ENCODE measurements at regions of chr6 and their contacts with region 1.

Region 1: DNA sequence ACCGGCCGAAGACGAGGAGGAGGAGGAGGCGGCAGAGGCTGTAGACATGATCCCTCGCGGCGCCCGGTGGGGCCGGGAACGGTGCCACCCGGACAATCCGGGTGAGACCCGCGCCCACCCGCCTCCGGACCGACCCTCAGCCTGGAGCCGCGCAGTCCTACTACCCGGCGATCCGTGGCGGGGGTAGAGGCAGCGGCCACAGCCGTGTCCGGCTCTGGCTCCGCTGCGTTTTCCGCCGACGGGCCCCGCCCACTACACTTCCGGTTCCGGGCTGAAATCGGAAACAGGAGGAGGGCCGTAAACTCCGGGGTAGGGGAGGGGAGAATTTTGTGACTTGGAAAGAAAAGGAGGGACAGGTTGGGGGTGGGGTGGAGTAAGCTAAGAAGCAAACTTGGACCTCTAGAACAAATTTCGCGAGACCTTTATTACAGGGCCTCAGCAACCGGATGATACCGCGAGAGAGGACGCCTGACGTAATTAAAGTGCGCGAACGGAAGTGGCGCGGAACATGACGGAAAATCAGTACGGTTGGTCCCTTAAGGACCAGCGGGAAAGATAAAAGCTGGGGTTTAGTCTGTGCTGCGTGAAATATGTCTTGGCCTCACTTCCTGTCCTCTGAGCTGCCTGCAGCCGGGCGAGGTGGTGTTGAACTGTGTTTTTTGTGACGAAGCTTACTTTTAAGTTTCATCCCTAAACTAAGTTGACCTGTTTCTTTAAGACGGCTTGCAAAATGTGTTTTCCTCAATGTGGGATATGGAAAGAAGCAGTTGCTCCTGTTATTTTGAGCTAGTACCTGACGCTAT is at the start of gene MAP3K7:
- H3K4me3 ChIP-seq: peak within 1 kb of the TSS; percentile 80
- H3K27ac ChIP-seq: peak within 1 kb of the TSS; percentile 90
- H3K4me1 ChIP-seq: peaks cover 2% of the 10 kb centered on the region; the same call in 1 of the 2 replicates
- CTCF ChIP-seq: no peak

Region 2: DNA sequence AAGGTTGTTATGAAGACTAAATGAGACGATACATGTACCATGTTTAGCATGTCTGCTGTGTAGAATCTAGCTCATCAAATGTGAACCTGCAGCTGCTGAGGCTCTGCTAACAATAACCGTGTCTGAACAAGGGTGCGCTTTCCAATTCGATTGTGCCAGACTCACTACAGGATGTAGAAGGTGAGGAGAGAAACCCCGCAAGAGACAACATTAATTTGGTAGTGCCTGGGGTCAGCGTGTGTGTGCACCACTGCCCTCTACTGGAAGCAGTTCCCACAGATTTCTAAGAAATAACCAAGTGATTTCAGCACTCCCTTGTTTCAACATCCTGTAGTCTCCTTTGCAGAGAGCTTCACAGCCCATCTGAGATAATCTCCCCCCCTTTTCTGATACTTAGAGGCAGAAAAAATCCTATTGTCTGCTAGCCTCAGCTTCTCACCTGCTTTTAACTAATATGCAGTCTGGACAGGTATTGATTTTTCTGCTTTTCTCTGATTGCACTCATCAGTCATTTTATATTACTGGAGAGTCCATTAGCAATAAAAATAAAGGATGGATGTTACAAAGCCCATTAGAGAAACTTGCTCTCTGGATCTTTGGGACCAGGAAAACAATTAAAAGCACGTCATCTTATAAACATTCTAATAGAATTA is 193.7 kb before region 1 on chr6:
- CTCF ChIA-PET with region 1: no interaction called
- POLR2A ChIA-PET with region 1: no interaction called
- H3K4me3 ChIP-seq: no peak overlapping the region
- H3K27ac ChIP-seq: no peak overlapping the region
- H3K4me1 ChIP-seq: no peaks in the 10 kb centered on the region
- CTCF ChIP-seq: peak; percentile 63; the same call in 1 of the 2 replicates

Region 3: DNA sequence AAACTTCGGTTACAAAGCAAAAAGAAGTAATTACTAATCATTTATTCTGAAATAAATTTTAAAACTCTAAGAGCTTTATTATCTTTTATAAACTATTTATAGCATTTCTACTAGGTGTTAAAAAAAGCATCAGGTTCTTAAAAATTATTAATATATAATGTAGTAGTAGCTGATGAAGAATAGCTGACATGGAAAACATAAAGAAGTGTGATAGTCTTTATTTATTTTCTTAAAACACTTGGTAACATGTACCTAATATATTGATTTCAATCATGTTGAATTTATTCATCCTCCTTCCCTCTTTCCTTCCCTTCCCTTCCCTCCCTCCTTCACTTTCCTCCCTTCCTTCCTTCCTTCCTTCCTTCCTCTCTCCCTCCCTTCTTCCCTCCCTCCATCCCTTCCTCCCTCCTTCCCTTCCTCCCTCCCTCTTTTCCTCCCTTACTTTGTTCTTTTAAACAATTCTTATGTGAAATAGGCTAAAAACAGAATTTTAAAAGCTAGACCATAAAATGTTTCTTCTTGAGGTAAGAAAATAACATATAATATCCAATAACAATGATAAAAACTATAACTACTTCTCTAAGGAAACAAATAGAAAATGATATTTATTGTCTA is 913.8 kb after region 1 on chr6:
- CTCF ChIA-PET with region 1: no interaction called
- POLR2A ChIA-PET with region 1: interaction called, 12 read pairs
- H3K4me3 ChIP-seq: no peak overlapping the region
- H3K27ac ChIP-seq: no peak overlapping the region
- H3K4me1 ChIP-seq: no peaks in the 10 kb centered on the region
- CTCF ChIP-seq: no peak

Measured in HEK293 (cell line).